ENCODE measurements at regions of chr11 and their contacts with region 1.

Region 1: GRCh38 chr11:130213143-130213978 is 53.8 kb downstream of the ST14 start:
- DNase-seq: peak; percentile 21
- ATAC-seq: peak; percentile 83
- H3K4me3 ChIP-seq: peak overlapping the region in 1 of 3 experiments; percentile 48; a peak in 2 of 6 replicates
- H3K27ac ChIP-seq: no peak overlapping the region
- H3K4me1 ChIP-seq: peaks cover 22% of the 10 kb centered on the region
- H3K27me3 ChIP-seq: peaks cover 0 to 25% of the 10 kb centered on the region in 2 experiments; a peak in 4 of 5 replicates
- CTCF ChIP-seq: peak; percentile 97
- EP300 ChIP-seq: no peak
- POLR2A ChIP-seq: no peak
- RAD21 ChIP-seq: peak; percentile 91

Region 2: GRCh38 chr11:130197386-130198035 is 15.8 kb before region 1 on chr11:
- CTCF ChIA-PET with region 1: no interaction called
- POLR2A ChIA-PET with region 1: no interaction called
- in situ Hi-C with region 1: no loop called
- intact Hi-C with region 1: no loop called
- DNase-seq: no peak
- ATAC-seq: no peak
- H3K4me3 ChIP-seq: no peak overlapping the region
- H3K27ac ChIP-seq: no peak overlapping the region
- H3K4me1 ChIP-seq: peaks cover 17% of the 10 kb centered on the region
- H3K27me3 ChIP-seq: no peaks in the 10 kb centered on the region
- CTCF ChIP-seq: no peak
- EP300 ChIP-seq: no peak
- POLR2A ChIP-seq: no peak
- RAD21 ChIP-seq: no peak

Region 3: GRCh38 chr11:130370845-130371590 is 157.7 kb after region 1 on chr11:
- CTCF ChIA-PET with region 1: interaction called, 9 read pairs
- POLR2A ChIA-PET with region 1: no interaction called
- in situ Hi-C with region 1: loop called (anchors 10 kb)
- intact Hi-C with region 1: loop called (anchors 1 kb)
- DNase-seq: no peak
- ATAC-seq: peak; percentile 77
- H3K4me3 ChIP-seq: no peak overlapping the region
- H3K27ac ChIP-seq: no peak overlapping the region
- H3K4me1 ChIP-seq: no peaks in the 10 kb centered on the region
- H3K27me3 ChIP-seq: peaks cover 0 to 7% of the 10 kb centered on the region in 2 experiments; a peak in 2 of 5 replicates
- CTCF ChIP-seq: peak; percentile 40
- EP300 ChIP-seq: no peak
- POLR2A ChIP-seq: no peak
- RAD21 ChIP-seq: no peak

Region 4: DNA sequence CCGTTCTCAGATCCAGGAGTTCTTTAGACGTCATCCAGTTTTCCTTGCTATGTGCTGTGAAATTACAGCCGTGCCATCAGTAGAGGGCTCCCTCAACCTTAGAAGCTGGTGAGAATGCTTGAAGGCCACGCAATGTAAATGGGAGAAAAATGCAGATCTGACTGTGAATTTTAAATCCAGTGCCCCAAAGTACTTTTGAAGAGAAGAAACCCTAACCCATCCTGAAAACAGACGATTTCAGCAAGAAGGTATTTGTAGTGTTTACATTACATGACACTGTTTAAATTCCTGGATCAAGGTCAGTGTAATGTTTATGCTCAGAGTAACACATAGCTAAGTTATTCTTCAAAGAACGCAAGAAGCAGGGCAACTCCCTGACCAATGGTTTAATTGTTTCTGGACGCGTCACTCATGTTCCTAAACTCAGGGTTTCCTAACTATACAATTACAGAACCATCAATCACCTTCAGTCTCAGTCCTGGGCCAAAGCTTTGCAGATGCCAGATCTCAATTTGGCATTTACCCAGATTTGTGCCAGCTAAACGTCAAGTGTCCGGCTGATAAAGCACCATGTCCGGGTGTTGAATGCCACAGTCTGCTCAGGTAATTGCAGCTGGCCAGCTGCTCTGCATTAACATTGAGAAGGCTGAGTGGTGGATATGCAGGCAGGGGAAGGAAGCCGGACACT is 176.9 kb after region 1 on chr11:
- CTCF ChIA-PET with region 1: no interaction called
- POLR2A ChIA-PET with region 1: no interaction called
- in situ Hi-C with region 1: loop called (anchors 10 kb)
- intact Hi-C with region 1: loop called (anchors 5 kb)
- DNase-seq: peak; percentile 66
- ATAC-seq: peak; percentile 76
- H3K4me3 ChIP-seq: no peak overlapping the region
- H3K27ac ChIP-seq: no peak overlapping the region
- H3K4me1 ChIP-seq: peaks cover 26% of the 10 kb centered on the region
- H3K27me3 ChIP-seq: peaks cover 0 to 4% of the 10 kb centered on the region in 2 experiments; a peak in 1 of 5 replicates
- CTCF ChIP-seq: peak; percentile 39
- EP300 ChIP-seq: peak in 1 of 2 experiments; percentile 16; a peak in 1 of 4 replicates
- POLR2A ChIP-seq: no peak
- RAD21 ChIP-seq: no peak

Region 5: GRCh38 chr11:130420478-130421198 is 207.3 kb after region 1 on chr11:
- CTCF ChIA-PET with region 1: no interaction called
- POLR2A ChIA-PET with region 1: no interaction called
- in situ Hi-C with region 1: loop called (anchors 5 kb)
- intact Hi-C with region 1: no loop called
- DNase-seq: no peak
- ATAC-seq: no peak
- H3K4me3 ChIP-seq: no peak overlapping the region
- H3K27ac ChIP-seq: no peak overlapping the region
- H3K4me1 ChIP-seq: no peaks in the 10 kb centered on the region
- H3K27me3 ChIP-seq: peaks cover 7 to 92% of the 10 kb centered on the region in 2 experiments; a peak in 4 of 5 replicates
- CTCF ChIP-seq: no peak
- EP300 ChIP-seq: no peak
- POLR2A ChIP-seq: no peak
- RAD21 ChIP-seq: no peak

Region 6: DNA sequence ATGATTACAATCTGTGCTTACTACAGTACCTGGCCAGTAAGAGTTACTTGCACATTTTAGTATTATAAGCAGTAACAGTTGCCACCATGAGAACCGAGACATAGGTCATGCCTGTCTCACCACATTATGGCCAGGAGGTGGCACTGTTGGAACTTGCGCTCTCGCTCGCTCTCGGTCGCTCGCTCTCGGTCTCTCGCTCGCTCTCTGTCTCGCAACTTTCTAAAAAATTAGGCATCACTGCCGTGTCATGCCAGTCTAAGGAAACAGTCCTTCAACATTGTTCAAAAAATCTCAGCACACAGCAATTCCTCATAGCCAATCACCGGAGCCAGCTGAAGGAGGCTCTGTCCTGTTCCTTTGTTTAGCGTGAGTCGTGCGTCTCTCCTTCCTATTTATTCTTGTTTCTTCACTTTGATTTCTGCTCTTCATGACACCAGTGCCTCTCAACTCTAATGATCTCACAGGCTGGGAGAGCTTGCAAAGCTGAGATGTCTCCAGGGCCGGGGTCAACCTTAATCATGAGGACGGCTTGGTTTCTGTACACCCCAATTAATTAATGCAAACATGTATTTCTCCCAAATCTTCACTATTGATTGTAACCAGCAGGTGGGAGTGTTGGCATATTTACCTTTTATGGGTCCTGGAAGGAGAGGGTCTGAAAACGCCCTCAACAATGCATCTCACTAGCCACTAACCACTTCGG is 221.3 kb after region 1 on chr11:
- CTCF ChIA-PET with region 1: interaction called, 3 read pairs
- POLR2A ChIA-PET with region 1: no interaction called
- in situ Hi-C with region 1: no loop called
- intact Hi-C with region 1: loop called (anchors 1 kb)
- DNase-seq: peak; percentile 63
- ATAC-seq: peak; percentile 90
- H3K4me3 ChIP-seq: peak overlapping the region; percentile 50 to 73 (median 58)
- H3K27ac ChIP-seq: no peak overlapping the region
- H3K4me1 ChIP-seq: no peaks in the 10 kb centered on the region
- H3K27me3 ChIP-seq: peaks cover 0 to 12% of the 10 kb centered on the region in 2 experiments; a peak in 4 of 5 replicates
- CTCF ChIP-seq: peak; percentile 83
- EP300 ChIP-seq: no peak
- POLR2A ChIP-seq: no peak
- RAD21 ChIP-seq: peak; percentile 42

Region 7: DNA sequence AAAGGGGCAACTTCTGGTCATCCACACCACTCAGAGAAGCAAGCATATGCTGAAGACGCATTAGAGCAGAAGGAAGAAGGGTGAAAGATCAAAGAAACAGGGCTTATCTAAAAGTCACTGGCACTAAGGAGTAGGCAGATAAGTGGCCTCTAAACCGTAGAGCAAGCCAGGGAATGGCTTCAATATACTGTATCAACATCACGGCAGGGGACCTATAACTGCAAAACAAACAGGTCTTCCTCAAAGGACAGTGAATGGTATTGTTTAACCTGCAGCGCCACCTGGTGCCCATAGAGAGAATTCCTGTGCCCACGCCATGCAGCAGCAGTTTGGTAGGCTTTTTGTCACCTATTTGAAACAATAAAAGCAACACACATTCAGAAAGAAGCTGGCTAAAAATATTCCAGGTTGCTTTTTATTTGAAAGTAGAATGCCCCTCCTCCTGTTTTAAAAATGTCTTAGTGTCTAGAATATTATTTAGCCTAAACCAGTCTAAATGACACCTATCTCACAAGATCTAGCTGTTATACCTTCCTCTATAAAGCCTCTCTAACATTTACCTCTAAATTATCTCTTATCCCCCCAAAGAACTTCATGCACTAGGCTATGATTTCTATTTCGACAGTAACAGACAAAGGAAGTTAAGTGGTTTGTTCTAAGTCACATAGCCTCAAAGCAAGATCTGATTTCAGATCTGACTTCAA is 681.1 kb after region 1 on chr11:
- CTCF ChIA-PET with region 1: no interaction called
- POLR2A ChIA-PET with region 1: no interaction called
- in situ Hi-C with region 1: loop called (anchors 25 kb)
- intact Hi-C with region 1: loop called (anchors 2 kb)
- DNase-seq: peak; percentile 71
- ATAC-seq: peak; percentile 98
- H3K4me3 ChIP-seq: no peak overlapping the region
- H3K27ac ChIP-seq: no peak overlapping the region
- H3K4me1 ChIP-seq: no peaks in the 10 kb centered on the region
- H3K27me3 ChIP-seq: no peaks in the 10 kb centered on the region
- CTCF ChIP-seq: peak; percentile 89
- EP300 ChIP-seq: no peak
- POLR2A ChIP-seq: no peak
- RAD21 ChIP-seq: peak; percentile 82